Mammary epithelial cell (primary cell): ENCODE measurements at regions of chr6 and their contacts with region 1.

Region 1: DNA sequence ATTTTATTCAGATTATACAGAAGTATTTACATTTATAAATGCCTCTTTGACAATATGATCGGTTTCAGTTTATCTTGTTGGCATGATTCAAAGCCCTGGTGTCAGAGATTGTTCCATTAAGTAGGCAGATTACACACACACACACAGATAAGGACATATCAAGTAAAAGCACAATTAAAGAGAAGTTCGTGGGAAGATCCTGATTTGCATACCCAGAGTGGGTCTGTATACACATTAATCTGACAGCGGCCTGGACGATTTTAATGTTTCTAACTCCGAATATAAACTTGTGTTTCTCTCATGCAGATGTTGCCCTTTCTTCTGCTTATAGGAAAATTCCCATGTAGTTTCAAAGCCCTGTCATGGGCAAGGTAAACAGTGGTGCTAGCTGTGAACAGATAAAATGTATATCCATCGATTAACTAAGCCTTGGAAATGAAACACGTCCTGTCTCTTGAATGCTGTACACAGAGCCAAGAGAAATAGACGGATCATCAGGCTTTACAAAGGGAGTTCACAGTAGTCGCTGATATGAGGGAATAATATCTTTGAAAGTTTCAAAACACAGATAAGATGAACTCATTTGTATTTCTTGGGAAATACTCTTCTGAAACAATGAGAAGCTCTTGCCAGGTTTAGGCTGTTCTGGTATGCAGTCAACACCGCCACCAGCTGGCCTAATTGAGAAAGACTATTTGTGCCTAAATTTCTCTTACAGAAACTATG is 108.2 kb upstream of the GMDS start:
- DNase-seq: peak; percentile 61
- H3K4me3 ChIP-seq: no peak overlapping the region
- H3K27ac ChIP-seq: no peak overlapping the region
- H3K4me1 ChIP-seq: no peaks in the 10 kb centered on the region
- H3K27me3 ChIP-seq: no peaks in the 10 kb centered on the region
- CTCF ChIP-seq: peak; percentile 78 to 80

Region 2: GRCh38 chr6:1604158-1605030 is 749.2 kb before region 1 on chr6:
- CTCF ChIA-PET with region 1: no interaction called
- dilution Hi-C with region 1: no loop called
- in situ Hi-C with region 1: loop called (anchors 10 kb)
- intact Hi-C with region 1: loop called (anchors 1 kb)
- DNase-seq: peak; percentile 48
- H3K4me3 ChIP-seq: peak overlapping the region; percentile 39 to 57 (median 54)
- H3K27ac ChIP-seq: no peak overlapping the region
- H3K4me1 ChIP-seq: peaks cover 16% of the 10 kb centered on the region
- H3K27me3 ChIP-seq: no peaks in the 10 kb centered on the region
- CTCF ChIP-seq: peak; percentile 62 to 80

Region 3: GRCh38 chr6:1952726-1953360 is 400.7 kb before region 1 on chr6:
- CTCF ChIA-PET with region 1: no interaction called
- dilution Hi-C with region 1: no loop called
- in situ Hi-C with region 1: no loop called
- intact Hi-C with region 1: no loop called
- DNase-seq: peak; percentile 99
- H3K4me3 ChIP-seq: peak overlapping the region in 1 of 3 experiments; percentile 7
- H3K27ac ChIP-seq: peak overlapping the region; percentile 97
- H3K4me1 ChIP-seq: peaks cover 13% of the 10 kb centered on the region
- H3K27me3 ChIP-seq: no peaks in the 10 kb centered on the region
- CTCF ChIP-seq: peak in 1 of 2 donors; percentile 6

Region 4: DNA sequence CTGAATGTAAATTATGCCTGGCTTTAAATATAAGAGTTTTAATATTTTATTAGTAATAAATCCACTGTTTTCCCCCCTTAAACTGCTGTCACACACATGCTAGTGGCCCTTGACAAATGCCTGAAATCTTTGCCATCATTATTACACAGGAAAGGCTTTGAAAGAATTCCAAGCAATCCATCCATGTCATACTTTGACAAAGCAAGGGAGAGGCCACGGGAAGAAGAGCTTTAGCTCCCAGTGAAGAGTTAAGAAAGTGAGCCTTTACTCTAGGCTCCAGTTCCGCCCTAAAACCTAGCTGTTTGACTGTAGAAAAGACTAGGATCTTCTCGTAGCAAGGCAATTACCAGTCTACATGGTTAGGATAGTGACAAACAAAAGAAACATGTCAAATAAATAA is 256.1 kb before region 1 on chr6:
- CTCF ChIA-PET with region 1: no interaction called
- dilution Hi-C with region 1: no loop called
- in situ Hi-C with region 1: no loop called
- intact Hi-C with region 1: no loop called
- DNase-seq: no peak
- H3K4me3 ChIP-seq: no peak overlapping the region
- H3K27ac ChIP-seq: no peak overlapping the region
- H3K4me1 ChIP-seq: no peaks in the 10 kb centered on the region
- H3K27me3 ChIP-seq: no peaks in the 10 kb centered on the region
- CTCF ChIP-seq: no peak

Region 5: GRCh38 chr6:2209226-2209809 is 144.3 kb before region 1 on chr6:
- CTCF ChIA-PET with region 1: interaction called, 14 read pairs
- dilution Hi-C with region 1: no loop called
- in situ Hi-C with region 1: loop called in 1 of 2 experiments (anchors 10 kb)
- intact Hi-C with region 1: loop called (anchors 1 kb)
- DNase-seq: peak; percentile 50
- H3K4me3 ChIP-seq: no peak overlapping the region
- H3K27ac ChIP-seq: no peak overlapping the region
- H3K4me1 ChIP-seq: no peaks in the 10 kb centered on the region
- H3K27me3 ChIP-seq: no peaks in the 10 kb centered on the region
- CTCF ChIP-seq: peak; percentile 83 to 95

Region 6: GRCh38 chr6:2215342-2215741 is 138.2 kb before region 1 on chr6:
- CTCF ChIA-PET with region 1: interaction called, 4 read pairs
- dilution Hi-C with region 1: no loop called
- in situ Hi-C with region 1: loop called in 1 of 2 experiments (anchors 10 kb)
- intact Hi-C with region 1: no loop called
- DNase-seq: no peak
- H3K4me3 ChIP-seq: no peak overlapping the region
- H3K27ac ChIP-seq: no peak overlapping the region
- H3K4me1 ChIP-seq: no peaks in the 10 kb centered on the region
- H3K27me3 ChIP-seq: no peaks in the 10 kb centered on the region
- CTCF ChIP-seq: no peak

Region 7: GRCh38 chr6:2695454-2696095 is 342.0 kb after region 1 on chr6:
- CTCF ChIA-PET with region 1: no interaction called
- dilution Hi-C with region 1: no loop called
- in situ Hi-C with region 1: no loop called
- intact Hi-C with region 1: loop called (anchors 2 kb)
- DNase-seq: peak; percentile 38
- H3K4me3 ChIP-seq: no peak overlapping the region
- H3K27ac ChIP-seq: no peak overlapping the region
- H3K4me1 ChIP-seq: no peaks in the 10 kb centered on the region
- H3K27me3 ChIP-seq: no peaks in the 10 kb centered on the region
- CTCF ChIP-seq: peak; percentile 17 to 50